ENCODE measurements at regions of chr1 and their contacts with region 1.

Region 1: DNA sequence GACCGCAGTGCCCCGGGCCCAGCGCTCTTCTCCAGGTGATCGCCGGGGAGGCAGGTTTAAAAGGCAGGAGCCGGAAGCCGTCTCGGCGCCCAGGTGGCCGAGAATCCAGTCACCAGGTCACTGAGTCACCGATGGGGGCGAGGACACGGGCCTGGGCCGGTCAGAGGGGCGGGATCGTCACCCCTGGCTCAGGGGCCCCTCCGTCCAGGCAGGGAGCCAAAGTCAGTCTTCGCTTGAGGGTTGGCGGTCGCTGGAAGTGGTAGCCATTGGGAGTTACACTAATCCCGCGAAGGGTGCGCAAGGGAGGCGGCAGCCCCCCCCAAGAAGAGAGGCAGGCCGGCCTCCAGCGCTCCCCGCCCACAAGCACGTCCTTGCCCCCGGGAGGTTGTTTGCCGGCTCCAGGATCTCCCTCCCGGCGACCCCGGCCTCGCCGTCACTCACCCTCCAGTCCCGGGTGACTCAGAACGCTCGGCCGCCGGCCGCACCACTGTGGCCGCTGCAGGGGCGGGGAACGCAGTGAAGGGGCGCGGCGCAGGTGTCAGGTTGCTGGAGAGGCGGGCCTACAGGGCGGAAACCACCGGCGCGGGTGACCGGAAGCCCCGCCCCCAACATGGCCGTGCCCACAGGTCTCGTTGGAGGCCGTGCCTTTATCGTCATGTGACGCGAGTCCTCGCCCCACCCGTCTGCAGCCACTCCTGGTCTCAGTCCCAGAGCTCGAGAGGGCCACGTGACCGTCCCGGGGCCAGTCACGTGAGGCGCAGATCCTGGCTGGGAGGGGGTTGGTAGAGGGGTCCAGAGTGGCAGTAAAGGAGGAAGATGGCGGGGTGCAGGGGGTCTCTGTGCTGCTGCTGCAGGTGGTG is at the starts of genes CLCN6 and MTHFR:
- DNase-seq: peak; percentile 98
- ATAC-seq: peak; percentile 92
- H3K4me3 ChIP-seq: peak within 1 kb of the TSS; percentile 86 to 88 (median 87)
- H3K27ac ChIP-seq: peak within 1 kb of the TSS; percentile 94
- H3K4me1 ChIP-seq: peaks cover 69% of the 10 kb centered on the region
- H3K27me3 ChIP-seq: no peaks in the 10 kb centered on the region; a peak in 1 of 5 replicates
- CTCF ChIP-seq: peak; percentile 18; the same call in 1 of the 2 replicates
- EP300 ChIP-seq: peak in 1 of 2 experiments; percentile 48; a peak in 1 of 4 replicates
- POLR2A ChIP-seq: peak; percentile 70 to 82
- RAD21 ChIP-seq: peak; percentile 55; the same call in 1 of the 2 replicates
- total RNA-seq, gene CLCN6: 10.1 and 19.3 TPM in 2 replicates
- total RNA-seq, gene MTHFR: 5.0 and 8.2 TPM in 2 replicates

Region 2: DNA sequence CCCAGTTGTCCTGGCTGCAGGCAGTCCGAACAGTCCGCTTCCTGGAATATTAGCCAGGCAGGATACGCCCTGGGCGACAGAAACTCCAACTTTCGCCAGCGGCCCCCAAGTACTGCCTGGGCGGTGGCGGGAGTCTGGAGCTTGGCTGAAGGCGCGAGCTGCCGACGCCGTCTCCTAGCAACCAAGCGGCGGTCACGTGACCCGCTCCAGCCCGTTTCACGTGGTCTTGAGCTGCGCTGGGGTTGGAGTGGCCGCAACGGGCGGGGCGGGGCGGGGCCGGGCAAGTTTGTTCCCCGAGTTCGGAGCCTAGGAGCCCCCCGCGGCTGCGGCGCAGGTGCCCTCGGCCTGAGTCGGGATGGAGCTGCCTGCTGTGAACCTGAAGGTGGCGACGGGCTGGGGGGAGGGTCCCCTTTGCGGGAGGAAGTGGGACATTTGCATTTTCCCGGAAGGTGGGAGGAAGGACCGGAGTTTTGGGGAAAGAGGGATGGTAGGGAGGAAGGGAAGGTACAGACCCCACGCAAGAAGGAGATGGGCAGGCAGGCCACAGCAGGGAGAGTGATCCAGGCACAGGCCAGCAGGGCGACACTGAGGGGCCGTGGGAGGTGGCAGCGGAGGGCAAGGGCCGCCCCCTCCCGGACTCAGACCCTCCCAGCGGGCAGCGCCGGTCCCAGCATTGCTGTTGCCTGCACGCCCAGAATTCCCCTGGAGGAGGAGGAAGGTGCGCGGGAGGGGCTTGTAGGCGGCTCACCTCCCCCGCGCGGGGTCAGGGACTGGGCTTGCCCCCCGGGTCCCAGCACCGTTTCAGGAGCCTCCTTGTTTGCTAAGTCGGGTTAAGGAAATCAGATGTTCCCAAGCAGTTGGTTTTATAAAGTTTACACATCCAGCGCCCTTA is 69.6 kb before region 1 on chr1 and contains the start of gene AGTRAP:
- CTCF ChIA-PET with region 1: no interaction called
- POLR2A ChIA-PET with region 1: interaction called, 12 read pairs
- in situ Hi-C with region 1: no loop called
- intact Hi-C with region 1: no loop called
- DNase-seq: peak; percentile 82
- ATAC-seq: peak; percentile 89
- H3K4me3 ChIP-seq: peak within 1 kb of the TSS; percentile 86 to 99 (median 98)
- H3K27ac ChIP-seq: peak within 1 kb of the TSS; percentile 71
- H3K4me1 ChIP-seq: peaks cover 51% of the 10 kb centered on the region
- H3K27me3 ChIP-seq: peaks cover 0 to 3% of the 10 kb centered on the region in 2 experiments; a peak in 2 of 5 replicates
- CTCF ChIP-seq: peak; percentile 45; the same call in 1 of the 2 replicates
- EP300 ChIP-seq: peak in 1 of 2 experiments; percentile 15; a peak in 1 of 4 replicates
- POLR2A ChIP-seq: peak; percentile 24 to 36; a peak in 1 of 4 replicates
- RAD21 ChIP-seq: no peak
- total RNA-seq, gene AGTRAP: 15.7 and 32.0 TPM in 2 replicates

Region 3: GRCh38 chr1:11784993-11785769 is 20.5 kb before region 1 on chr1:
- CTCF ChIA-PET with region 1: no interaction called
- POLR2A ChIA-PET with region 1: interaction called, 12 read pairs
- in situ Hi-C with region 1: no loop called
- intact Hi-C with region 1: loop called (anchors 1 kb)
- DNase-seq: peak; percentile 64
- ATAC-seq: peak; percentile 95
- H3K4me3 ChIP-seq: peak overlapping the region in 2 of 3 experiments; percentile 29 to 63; a peak in 4 of 6 replicates
- H3K27ac ChIP-seq: no peak overlapping the region
- H3K4me1 ChIP-seq: peaks cover 40% of the 10 kb centered on the region
- H3K27me3 ChIP-seq: peaks cover 1 to 8% of the 10 kb centered on the region in 2 experiments; a peak in 3 of 5 replicates
- CTCF ChIP-seq: peak; percentile 98
- EP300 ChIP-seq: no peak
- POLR2A ChIP-seq: no peak
- RAD21 ChIP-seq: peak; percentile 84

Region 4: GRCh38 chr1:11898831-11899467 is 93.3 kb after region 1 on chr1:
- CTCF ChIA-PET with region 1: no interaction called
- POLR2A ChIA-PET with region 1: no interaction called
- in situ Hi-C with region 1: no loop called
- intact Hi-C with region 1: no loop called
- DNase-seq: no peak
- ATAC-seq: peak; percentile 74
- H3K4me3 ChIP-seq: no peak overlapping the region
- H3K27ac ChIP-seq: no peak overlapping the region
- H3K4me1 ChIP-seq: peaks cover 8% of the 10 kb centered on the region
- H3K27me3 ChIP-seq: peaks cover 0 to 11% of the 10 kb centered on the region in 2 experiments; a peak in 3 of 5 replicates
- CTCF ChIP-seq: no peak
- EP300 ChIP-seq: no peak
- POLR2A ChIP-seq: no peak
- RAD21 ChIP-seq: no peak

Measured in HepG2 (cell line).